Activated CD4-positive, alpha-beta T cell treated with anti-CD3 and anti-CD28 coated beads for 36 hours (primary cell): ENCODE measurements at regions of chr11 and their contacts with region 1.

Region 1: DNA sequence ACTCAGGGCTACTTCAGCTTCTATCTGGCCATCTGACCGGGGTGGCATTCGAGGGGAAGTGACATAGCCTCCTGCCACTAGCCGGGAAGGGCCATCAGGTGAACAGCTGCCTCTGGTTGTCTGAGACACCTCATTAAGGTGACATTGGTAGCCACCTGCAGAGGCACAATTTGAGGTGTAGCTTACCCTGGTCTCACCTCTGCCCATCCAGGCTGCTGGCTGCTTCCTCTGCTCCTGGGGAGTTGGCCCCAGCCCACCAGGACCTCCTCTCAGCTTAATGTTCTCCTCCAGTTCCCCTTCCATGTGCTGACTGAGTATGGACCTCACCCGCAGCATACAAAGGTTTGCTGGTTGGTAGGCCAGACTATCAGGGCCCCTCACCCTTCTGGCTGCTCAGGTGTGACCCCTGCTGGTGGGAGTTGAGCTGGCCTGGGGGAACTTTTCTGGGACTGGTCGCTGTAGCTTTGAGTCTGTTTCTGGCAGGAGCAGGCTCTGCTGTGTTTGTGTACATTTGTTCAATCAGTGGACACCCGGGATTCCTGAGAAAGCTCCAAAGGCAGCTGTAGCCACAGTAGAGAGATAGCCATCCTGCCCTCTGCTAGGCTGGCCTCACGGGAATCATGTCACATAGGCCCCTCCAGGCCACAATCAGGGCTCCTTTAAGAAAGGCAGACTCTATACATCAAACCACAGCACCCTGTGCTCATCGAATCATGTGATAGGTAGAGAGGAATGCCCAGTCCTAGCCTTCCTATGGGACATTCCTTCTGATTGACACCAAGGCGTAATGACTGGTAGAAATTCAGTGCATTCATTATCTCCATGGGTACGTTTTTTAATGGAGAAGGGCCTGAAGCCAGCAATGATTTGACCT is 295.1 kb upstream of the PLET1 start:
- DNase-seq: peak; percentile 86
- ATAC-seq: peak; percentile 91
- H3K4me3 Mint-ChIP-seq: no peak overlapping the region
- H3K27ac Mint-ChIP-seq: no peak overlapping the region
- H3K4me1 Mint-ChIP-seq: peaks cover 3% of the 10 kb centered on the region
- H3K27me3 Mint-ChIP-seq: no peaks in the 10 kb centered on the region

Region 2: DNA sequence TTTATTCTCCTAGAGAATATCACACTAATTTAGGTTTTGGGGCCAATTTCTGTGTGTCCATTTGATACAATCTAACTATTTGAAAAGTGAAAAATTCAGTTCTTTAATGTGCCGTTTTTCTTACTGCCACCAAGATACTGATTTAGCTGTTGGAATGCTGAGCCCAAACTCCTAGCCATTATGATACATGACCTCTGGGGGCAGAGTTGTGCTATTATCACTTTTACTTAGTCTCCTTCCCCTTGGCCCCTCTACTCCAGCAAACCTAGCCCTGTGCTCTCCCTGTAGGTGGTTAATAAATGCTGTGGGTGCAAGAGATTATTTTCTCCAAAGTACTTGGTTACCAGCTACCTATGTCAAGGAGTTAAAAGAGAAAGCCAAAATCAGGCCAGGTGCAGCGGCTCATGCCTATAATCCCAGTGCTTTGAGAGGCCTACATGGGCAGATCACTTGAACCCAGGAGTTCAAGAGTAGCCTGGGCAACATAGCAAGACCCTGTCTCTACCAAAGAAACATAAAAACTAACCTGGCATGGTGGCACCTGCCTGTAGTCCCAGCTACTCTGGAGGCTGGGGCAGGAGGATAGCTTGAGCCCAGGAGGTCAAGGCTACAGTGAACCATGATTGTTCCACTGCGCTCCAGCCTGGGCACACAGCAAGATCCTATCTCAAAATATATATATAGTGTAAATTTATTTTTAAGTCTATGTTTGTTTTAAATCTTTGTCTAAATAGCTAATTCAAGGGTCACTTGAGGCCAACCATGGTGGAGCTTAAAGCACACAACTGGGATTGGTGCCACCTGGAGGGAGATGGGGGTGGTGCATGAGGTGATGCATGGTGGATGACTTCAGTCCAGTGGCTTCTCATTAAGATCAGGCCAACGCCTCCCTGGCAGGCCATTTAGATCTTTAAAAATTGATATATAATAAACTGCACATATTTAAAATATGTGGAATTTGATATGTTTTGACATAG is 101.8 kb before region 1 on chr11:
- CTCF ChIA-PET with region 1: interaction called, 6 read pairs
- POLR2A ChIA-PET with region 1: no interaction called
- intact Hi-C with region 1: loop called in 1 of 2 experiments (anchors 10 kb)
- DNase-seq: peak; percentile 75
- ATAC-seq: no peak
- H3K4me3 Mint-ChIP-seq: no peak overlapping the region
- H3K27ac Mint-ChIP-seq: no peak overlapping the region
- H3K4me1 Mint-ChIP-seq: no peaks in the 10 kb centered on the region
- H3K27me3 Mint-ChIP-seq: no peaks in the 10 kb centered on the region

Region 3: DNA sequence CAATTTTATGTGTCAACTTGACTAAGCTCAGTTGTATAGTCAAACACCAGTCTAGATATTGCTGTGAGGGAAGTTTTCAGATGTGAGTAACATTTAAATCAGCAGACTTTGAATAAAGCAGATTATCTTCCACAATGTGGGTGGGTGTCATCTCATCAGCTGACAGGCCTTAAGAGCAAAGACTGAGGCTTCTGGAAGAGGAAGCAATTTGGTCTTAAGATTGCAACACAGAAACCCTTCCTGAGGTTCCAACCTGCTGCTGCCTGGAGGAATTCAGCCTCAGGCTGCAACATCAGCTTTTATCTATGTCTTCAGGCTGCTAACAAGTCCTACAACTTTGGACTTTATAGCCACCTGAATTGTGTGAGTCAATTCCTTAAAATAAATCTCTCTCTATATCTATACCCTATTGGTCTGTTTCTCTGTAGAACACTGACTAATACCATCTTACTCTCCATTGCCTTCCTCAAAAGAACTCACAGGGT is 17.8 kb before region 1 on chr11:
- CTCF ChIA-PET with region 1: interaction called, 18 read pairs
- POLR2A ChIA-PET with region 1: no interaction called
- intact Hi-C with region 1: no loop called
- DNase-seq: no peak
- ATAC-seq: peak; percentile 76
- H3K4me3 Mint-ChIP-seq: no peak overlapping the region
- H3K27ac Mint-ChIP-seq: peak overlapping the region; percentile 52
- H3K4me1 Mint-ChIP-seq: peaks cover 51% of the 10 kb centered on the region
- H3K27me3 Mint-ChIP-seq: peaks cover 9% of the 10 kb centered on the region

Region 4: GRCh38 chr11:112596324-112596723 is 40.6 kb after region 1 on chr11:
- CTCF ChIA-PET with region 1: no interaction called
- POLR2A ChIA-PET with region 1: no interaction called
- intact Hi-C with region 1: no loop called
- DNase-seq: no peak
- ATAC-seq: no peak
- H3K4me3 Mint-ChIP-seq: no peak overlapping the region
- H3K27ac Mint-ChIP-seq: no peak overlapping the region
- H3K4me1 Mint-ChIP-seq: peaks cover 6% of the 10 kb centered on the region
- H3K27me3 Mint-ChIP-seq: no peaks in the 10 kb centered on the region